ENCODE measurements at regions of chr17 and their contacts with region 1.

Region 1: DNA sequence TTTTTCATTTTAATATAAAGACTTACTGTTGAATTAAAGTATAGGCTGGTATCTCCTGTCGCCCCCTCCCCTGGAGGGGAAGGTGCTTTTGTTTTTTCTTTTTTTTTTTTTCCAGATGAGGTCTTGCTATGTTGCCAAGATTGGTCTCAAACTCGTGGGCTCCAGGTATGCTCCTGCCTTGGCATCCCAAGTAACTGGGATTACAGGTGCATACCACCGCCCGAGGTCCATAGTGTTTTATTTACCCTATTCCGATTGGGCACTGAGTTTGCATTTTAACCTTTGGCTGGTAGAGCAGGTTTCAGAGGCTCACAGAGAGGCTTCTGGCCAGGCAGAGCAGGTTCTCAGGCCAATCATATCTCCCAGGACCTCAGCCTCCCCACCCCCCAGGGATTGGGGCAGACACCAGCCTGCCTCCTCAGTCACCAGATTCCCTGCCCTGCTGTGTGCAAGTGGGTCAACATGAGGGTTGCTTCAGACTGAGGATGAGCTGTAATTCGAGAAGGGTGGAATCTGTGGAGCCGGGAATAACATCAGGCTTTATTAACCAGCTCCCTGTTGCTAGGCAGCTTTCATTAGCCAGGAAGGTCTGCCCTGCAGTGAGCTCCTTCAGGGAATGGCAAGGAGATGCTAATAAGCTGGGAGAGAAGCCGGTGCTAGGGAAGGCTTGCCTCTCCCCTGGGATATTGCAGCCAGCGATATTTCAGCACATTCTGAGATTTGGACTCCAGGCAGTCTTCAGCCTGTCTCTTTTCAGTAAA is 10.4 kb downstream of the SGSM2 start:
- DNase-seq: peak; percentile 93 to 95
- H3K4me3 ChIP-seq: no peak overlapping the region; the same call in 1 of the 2 replicates
- H3K27ac ChIP-seq: peak overlapping the region; percentile 77
- H3K4me1 ChIP-seq: peaks cover 34% of the 10 kb centered on the region
- H3K27me3 ChIP-seq: no peaks in the 10 kb centered on the region
- CTCF ChIP-seq: no peak

Region 2: GRCh38 chr17:2468270-2468669 is 120.5 kb after region 1 on chr17:
- CTCF ChIA-PET with region 1: interaction called, 10 read pairs
- POLR2A ChIA-PET with region 1: no interaction called
- intact Hi-C with region 1: no loop called
- DNase-seq: no peak
- H3K4me3 ChIP-seq: no peak overlapping the region
- H3K27ac ChIP-seq: no peak overlapping the region
- H3K4me1 ChIP-seq: no peaks in the 10 kb centered on the region
- H3K27me3 ChIP-seq: no peaks in the 10 kb centered on the region
- CTCF ChIP-seq: no peak